ENCODE measurements at regions of chr17 and their contacts with region 1.

Region 1: GRCh38 chr17:27760069-27760885 is 40.1 kb downstream of the NOS2 start:
- DNase-seq: peak; percentile 58 to 75
- ATAC-seq: peak in 7 of 8 donors; percentile 39 to 69 (median 59)
- H3K4me3 ChIP-seq: no peak overlapping the region
- H3K27ac ChIP-seq: no peak overlapping the region
- H3K4me1 ChIP-seq: no peaks in the 10 kb centered on the region
- H3K27me3 ChIP-seq: no peaks in the 10 kb centered on the region
- CTCF ChIP-seq: peak; percentile 83 to 96 (median 92)

Region 2: DNA sequence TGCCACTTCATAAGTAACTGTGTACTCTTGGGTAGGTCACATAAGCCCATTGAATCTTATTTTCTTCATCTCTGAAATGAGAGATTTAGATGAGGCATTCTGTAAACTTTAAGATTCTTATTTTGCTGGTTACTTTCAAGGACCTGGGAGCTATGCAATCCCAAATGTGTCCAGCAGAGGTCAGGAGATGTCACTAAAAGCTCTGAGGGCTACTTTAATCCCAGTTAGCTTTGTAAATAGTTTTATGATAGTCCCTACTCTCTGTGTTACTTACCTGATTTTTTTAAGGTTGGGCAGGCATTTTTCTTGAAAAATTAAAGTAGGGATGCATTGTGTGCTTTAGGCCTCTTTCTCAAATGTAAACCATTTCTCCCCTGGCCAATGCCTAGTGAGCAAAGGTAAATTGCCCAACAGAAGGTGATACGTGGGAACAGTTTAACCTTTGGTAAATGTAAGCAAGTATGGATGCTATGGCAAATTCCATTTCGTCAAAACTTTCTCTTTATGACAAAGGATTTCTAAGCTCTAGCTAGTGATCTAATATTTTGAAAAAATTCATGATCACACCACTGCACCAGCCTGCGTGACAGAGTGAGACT is 523.5 kb before region 1 on chr17:
- intact Hi-C with region 1: loop called in 1 of 10 experiments (anchors 10 kb)
- DNase-seq: peak in 1 of 2 donors; percentile 80
- ATAC-seq: peak in 7 of 8 donors; percentile 61 to 79 (median 77)
- H3K4me3 ChIP-seq: no peak overlapping the region
- H3K27ac ChIP-seq: no peak overlapping the region
- H3K4me1 ChIP-seq: peaks cover 0 to 54% (median 3%) of the 10 kb centered on the region in 9 donors
- H3K27me3 ChIP-seq: no peaks in the 10 kb centered on the region
- CTCF ChIP-seq: peak; percentile 84 to 97 (median 94)

Region 3: DNA sequence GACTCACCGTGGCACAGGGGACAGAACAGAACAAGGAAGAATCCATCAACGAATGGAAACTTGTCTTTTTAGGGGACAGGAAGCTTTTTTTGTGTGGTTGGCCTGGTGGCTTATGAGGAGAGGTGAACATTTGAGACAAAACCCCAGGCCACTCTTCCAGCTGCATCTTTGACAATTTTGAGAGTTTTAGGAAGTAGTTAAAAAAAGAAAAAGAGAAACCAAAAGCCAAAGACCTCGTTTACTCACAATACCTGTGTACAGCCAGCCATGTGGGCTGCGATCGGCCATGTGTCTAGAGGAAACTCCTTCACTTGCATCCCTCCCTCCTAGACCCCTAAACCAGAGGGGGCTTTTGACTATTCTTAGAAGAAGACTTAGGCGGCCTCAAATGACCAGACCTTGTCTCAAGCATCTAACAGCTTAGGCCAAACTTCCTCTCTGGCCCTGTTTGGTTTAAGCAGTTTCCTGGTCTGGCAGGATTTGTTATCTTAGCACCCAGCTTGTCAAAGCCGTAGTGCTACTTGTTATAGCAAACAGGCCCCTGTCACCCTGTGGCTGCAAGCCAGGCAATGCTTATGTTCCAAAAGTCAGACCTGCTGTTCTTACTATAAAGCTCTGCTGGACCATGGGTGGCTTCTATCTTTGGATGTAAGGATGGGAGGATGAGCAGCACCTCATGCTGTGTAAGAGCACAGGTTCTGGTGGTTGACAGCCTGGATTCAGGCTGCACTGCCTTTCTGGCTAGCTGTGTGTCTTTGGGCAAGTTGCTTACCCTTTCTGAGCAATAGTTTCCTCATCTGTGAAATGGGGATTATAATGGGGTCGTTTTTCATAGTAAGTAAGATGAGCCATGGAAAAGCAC is 286.3 kb before region 1 on chr17:
- intact Hi-C with region 1: no loop called
- DNase-seq: peak; percentile 62 to 76
- ATAC-seq: peak; percentile 57 to 85 (median 77)
- H3K4me3 ChIP-seq: no peak overlapping the region
- H3K27ac ChIP-seq: peak overlapping the region in 4 of 10 donors; percentile 44 to 83 (median 58)
- H3K4me1 ChIP-seq: peaks cover 8 to 71% (median 26%) of the 10 kb centered on the region in 9 donors
- H3K27me3 ChIP-seq: no peaks in the 10 kb centered on the region
- CTCF ChIP-seq: no peak

Region 4: GRCh38 chr17:27609611-27610303 is 150.5 kb before region 1 on chr17:
- intact Hi-C with region 1: loop called in 5 of 10 experiments (anchors 1 to 10 kb)
- DNase-seq: no peak
- ATAC-seq: peak; percentile 31 to 79 (median 72)
- H3K4me3 ChIP-seq: no peak overlapping the region
- H3K27ac ChIP-seq: no peak overlapping the region
- H3K4me1 ChIP-seq: peaks cover 0 to 7% (median 0%) of the 10 kb centered on the region in 9 donors
- H3K27me3 ChIP-seq: no peaks in the 10 kb centered on the region
- CTCF ChIP-seq: peak; percentile 37 to 74 (median 63)

Measured in heart right ventricle (tissue), 16 donors.